Right ventricle myocardium inferior (tissue), 1 donor: ENCODE measurements at regions of chr14 and their contacts with region 1.

Region 1: DNA sequence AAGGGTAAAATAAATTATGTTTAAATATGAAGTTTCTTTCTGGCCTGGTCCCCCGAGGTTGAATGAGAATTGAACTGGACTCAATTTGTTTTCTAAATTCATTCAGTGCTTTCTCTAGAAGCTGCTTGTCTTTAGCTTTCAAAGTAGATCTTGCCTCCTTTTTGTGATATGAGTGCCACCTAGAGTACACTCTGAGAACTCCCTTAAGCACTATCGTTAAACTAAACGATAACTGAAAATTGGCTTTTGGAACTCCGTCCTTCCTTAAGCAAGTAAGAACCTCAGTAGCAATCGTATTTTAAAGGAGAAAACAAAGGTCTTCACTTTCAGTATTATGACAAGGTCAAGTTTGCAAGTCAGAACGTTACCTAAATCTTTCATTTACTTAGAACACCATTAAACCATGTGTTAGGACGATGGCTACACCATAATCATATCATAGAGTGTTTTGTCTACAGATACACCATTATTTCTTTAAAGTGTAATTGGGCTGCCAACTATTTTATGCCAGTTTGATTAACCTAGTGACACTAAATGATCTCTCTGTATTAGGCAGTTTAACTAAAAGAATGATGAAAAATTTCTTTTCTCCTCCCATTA is 364.8 kb downstream of the SNAPC1 start:
- DNase-seq: no peak
- ATAC-seq: no peak

Region 2: DNA sequence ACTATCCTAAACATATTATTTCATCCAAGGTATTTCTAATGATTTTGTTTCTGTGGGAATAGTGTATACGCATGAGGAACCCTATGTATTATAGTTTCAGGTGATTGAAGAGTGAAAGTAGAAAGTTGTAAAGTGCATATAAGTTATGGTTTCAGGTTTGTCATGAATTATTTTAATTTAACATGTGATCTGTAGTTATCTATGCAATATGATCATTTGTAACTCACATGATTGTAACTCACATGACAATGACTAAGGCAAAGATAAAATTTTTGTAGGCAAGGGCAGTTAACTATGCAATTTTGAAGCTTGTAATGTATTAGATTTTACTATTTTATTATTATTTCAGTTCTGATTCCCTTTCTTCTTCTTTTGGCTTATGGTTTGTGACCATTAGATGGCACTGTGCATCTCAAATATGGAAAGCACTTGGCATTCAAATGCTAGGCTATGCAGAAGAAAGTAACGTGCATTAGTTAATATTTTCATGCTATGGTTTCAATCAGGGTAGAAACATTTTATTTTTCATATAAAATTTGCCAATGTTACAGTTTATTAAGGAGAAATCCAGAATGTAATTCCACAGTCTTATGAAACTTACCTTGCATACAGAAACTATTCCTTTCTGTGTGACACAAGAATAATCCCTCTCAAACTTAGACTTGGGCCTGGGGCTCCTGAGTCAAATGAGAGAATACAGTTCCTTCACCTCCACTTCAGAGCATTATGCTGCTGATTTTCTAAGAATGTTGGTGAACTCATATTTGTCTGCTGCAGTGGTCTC is 830.1 kb before region 1 on chr14:
- intact Hi-C with region 1: loop called (anchors 10 kb)
- DNase-seq: no peak
- ATAC-seq: no peak

Region 3: DNA sequence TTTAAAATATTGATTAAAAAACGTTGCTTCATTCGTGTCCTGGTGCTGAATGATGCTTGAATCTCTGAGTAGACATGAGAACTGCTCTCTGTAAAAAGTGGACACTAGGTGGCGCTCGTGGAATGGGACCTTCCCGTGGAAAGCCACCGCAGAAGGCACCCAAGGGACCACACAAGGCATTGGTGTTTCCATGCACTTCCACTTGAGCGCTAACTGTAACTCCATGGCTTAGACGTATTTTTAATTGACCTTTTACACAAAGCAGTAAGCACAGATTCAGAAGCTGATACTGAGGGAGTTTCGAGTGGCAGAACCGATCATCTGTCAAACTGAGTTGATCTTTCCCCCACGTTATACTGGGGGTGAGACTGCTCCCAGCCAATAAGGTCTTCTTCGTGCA is 670.3 kb before region 1 on chr14:
- intact Hi-C with region 1: loop called (anchors 10 kb)
- DNase-seq: peak; percentile 87
- ATAC-seq: peak; percentile 75

Region 4: GRCh38 chr14:61894452-61895077 is 232.4 kb before region 1 on chr14:
- intact Hi-C with region 1: loop called (anchors 5 kb)
- DNase-seq: no peak
- ATAC-seq: no peak

Region 5: GRCh38 chr14:62097072-62097471 is 29.9 kb before region 1 on chr14:
- intact Hi-C with region 1: no loop called
- DNase-seq: no peak
- ATAC-seq: no peak

Region 6: GRCh38 chr14:62280366-62280765 is 153.4 kb after region 1 on chr14:
- intact Hi-C with region 1: no loop called
- DNase-seq: no peak
- ATAC-seq: no peak